ENCODE measurements at regions of chr1 and their contacts with region 1.

Region 1: DNA sequence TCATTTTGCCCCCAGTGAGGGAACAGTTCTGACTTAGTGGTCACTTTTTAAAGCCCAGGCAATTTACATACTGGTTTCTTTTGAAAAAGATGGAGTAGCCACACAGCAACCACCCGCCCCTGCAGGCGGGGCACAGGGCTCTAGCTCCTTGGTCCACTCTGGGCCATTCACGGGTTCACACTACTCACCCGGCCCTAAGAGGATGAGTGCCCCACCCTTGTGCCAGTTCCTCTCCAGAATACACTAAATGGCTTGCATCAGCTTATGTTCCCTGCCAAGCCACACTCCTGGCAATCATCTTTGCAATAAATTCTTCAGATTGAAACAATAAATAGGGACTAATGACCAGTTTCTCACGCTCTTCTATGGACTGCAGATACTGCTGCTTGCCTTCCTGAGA is 15.7 kb upstream of the ATP13A2 start:
- DNase-seq: peak; percentile 88
- H3K4me3 Mint-ChIP-seq: peak overlapping the region; percentile 34
- H3K27ac Mint-ChIP-seq: peak overlapping the region; percentile 36
- H3K4me1 Mint-ChIP-seq: peaks cover 16% of the 10 kb centered on the region
- H3K27me3 Mint-ChIP-seq: no peaks in the 10 kb centered on the region
- CTCF ChIP-seq: no peak

Region 2: DNA sequence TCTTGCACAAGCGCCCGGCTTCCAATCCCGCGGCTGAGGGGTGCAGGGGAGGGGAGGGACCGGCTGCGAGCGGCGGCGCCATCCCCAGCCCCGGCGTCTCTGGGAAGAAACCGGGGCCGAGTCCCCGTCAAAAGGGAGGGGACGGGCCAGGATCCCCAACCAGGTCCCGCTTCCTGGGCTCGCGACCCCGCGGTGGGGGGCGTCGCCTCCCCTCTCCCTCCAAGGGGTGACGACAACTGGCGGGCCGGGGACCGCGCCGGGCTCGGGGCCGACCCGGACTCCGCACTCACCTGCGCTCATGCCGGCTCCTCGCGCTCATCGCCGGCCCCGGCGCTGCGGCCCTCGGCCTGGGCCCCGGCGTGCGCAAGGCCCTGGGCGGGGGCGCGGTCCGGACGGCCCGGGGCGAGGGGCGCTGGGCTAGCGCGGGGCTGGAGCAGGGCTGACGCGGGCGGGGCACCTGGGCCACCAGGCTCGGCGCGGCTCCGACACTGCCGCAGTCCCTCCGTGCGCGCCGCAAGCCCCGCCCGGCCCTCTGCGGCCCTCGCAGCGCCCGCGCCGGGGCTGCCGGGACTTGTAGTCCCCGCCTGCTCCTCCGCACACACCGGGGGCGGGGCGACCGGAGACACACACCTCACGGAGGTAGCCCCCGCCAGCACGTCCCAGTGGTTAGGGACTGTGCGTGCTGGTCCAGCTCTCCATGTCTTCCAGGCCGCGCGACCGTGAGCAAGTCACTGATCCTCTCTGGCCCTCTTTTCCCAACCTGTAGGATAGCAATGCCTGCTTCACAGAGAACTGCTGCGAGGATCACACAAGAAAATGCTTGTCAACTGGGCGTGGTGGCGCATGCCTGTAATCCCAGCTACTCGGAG is 15.7 kb before region 1 on chr1 and contains the start of gene ATP13A2:
- CTCF ChIA-PET with region 1: no interaction called
- POLR2A ChIA-PET with region 1: interaction called, 13 read pairs
- intact Hi-C with region 1: no loop called
- DNase-seq: peak; percentile 75
- H3K4me3 Mint-ChIP-seq: peak within 1 kb of the TSS; percentile 76
- H3K27ac Mint-ChIP-seq: peak within 1 kb of the TSS; percentile 42
- H3K4me1 Mint-ChIP-seq: peaks cover 18% of the 10 kb centered on the region
- H3K27me3 Mint-ChIP-seq: no peaks in the 10 kb centered on the region
- CTCF ChIP-seq: no peak
- total RNA-seq, gene ATP13A2: 59.4 and 61.3 TPM in 2 replicates

Region 3: DNA sequence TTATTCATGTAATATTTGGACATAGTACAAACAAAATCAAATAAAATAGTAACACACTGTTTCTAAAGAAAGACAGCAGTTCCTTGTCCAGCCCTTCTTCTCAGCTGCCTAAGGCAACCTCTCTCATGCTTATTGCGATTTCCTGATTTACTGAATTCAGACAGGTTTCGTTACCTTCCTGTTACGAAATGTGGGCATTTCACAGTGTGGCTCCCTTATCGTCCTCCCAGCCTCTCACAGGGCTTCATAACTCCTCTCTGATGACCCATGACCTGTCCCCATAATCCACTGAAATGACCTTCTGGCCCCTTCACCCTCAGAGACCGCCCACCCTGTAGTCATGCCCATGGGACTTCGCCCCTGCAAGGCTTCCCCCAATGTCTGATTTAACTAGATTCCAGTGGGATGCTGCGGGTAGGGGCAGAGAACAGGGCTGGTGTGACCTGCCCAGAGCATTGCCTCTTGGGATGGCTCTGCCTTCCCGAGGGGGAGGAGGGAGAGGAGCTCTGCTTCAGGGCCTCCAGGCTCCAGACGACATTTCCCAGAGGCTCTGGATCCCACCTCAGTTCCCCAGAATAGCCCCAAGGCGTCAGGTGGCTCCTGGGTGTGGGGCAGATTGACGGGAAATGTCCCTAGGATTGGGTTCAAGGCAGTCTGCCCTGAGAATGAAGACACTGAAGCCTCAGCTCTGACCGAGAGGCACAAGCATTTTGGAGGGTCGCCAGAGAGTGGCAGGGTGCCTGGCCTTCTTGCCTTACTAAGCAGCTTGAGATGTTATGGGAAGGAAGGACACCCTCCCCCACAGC is 71.2 kb after region 1 on chr1:
- CTCF ChIA-PET with region 1: no interaction called
- POLR2A ChIA-PET with region 1: no interaction called
- intact Hi-C with region 1: no loop called
- DNase-seq: peak; percentile 80
- H3K4me3 Mint-ChIP-seq: peak overlapping the region; percentile 2
- H3K27ac Mint-ChIP-seq: peak overlapping the region; percentile 61
- H3K4me1 Mint-ChIP-seq: peaks cover 22% of the 10 kb centered on the region
- H3K27me3 Mint-ChIP-seq: no peaks in the 10 kb centered on the region
- CTCF ChIP-seq: no peak